ENCODE measurements at regions of chr20 and their contacts with region 1.

Region 1: GRCh38 chr20:45857114-45857881 is at the starts of genes ACOT8 and ZSWIM3:
- DNase-seq: peak; percentile 67
- ATAC-seq: peak; percentile 98
- H3K4me3 Mint-ChIP-seq: peak within 1 kb of the TSS; percentile 94
- H3K27ac Mint-ChIP-seq: peak within 1 kb of the TSS; percentile 94
- H3K4me1 Mint-ChIP-seq: peaks cover 48% of the 10 kb centered on the region
- H3K27me3 Mint-ChIP-seq: no peaks in the 10 kb centered on the region
- CTCF ChIP-seq: no peak
- total RNA-seq, gene ACOT8: 24.5 and 27.3 TPM in 2 replicates
- total RNA-seq, gene ZSWIM3: 5.9 and 6.4 TPM in 2 replicates

Region 2: DNA sequence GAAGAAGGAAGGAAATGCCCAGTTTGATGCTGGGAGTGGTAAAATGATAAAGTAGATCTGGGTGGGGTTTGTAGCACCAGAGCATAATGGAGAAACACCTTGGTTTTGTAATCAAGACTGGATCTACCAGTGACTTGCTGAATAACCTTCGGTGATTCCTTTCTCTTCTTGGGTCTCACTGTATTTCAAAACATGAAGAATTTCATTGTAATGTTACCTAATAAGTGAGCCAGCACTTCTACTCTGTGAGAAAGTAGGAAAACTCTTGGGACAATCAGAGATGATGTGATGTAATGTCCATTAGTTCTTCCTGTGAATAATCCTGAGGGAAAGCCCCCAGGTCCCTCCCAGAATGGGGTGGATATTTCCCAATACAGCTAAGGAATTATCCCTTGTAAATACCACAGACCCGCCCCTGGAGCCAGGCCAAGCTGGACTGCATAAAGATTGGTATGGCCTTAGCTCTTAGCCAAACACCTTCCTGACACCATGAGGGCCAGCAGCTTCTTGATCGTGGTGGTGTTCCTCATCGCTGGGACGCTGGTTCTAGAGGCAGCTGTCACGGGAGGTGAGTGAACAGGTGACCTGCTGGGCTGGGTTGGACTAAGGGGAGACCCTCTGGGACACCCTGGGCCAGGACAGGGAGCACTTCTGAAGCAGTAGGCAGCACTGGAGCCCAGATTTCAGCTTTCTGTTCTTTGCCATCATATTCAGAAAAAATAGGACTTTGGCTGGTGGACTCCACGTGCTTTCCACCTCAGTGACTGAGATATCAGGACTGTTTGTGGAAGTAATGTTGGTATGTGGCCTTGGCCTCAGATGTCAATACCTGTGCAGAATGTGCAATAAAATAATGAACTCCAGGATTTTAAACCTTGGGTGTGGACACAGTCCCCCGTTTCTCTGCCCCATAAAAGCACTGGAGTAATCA is 682.6 kb before region 1 on chr20 and contains the start of gene PI3:
- CTCF ChIA-PET with region 1: no interaction called
- POLR2A ChIA-PET with region 1: no interaction called
- intact Hi-C with region 1: no loop called
- DNase-seq: no peak
- ATAC-seq: no peak
- H3K4me3 Mint-ChIP-seq: no peak within 1 kb of the TSS
- H3K27ac Mint-ChIP-seq: no peak within 1 kb of the TSS
- H3K4me1 Mint-ChIP-seq: no peaks in the 10 kb centered on the region
- H3K27me3 Mint-ChIP-seq: peaks cover 27% of the 10 kb centered on the region
- CTCF ChIP-seq: no peak
- total RNA-seq, gene PI3: not detected in 2 replicates

Region 3: GRCh38 chr20:45798935-45799642 is 58.2 kb before region 1 on chr20:
- CTCF ChIA-PET with region 1: no interaction called
- POLR2A ChIA-PET with region 1: no interaction called
- intact Hi-C with region 1: no loop called
- DNase-seq: peak; percentile 25
- ATAC-seq: peak; percentile 95
- H3K4me3 Mint-ChIP-seq: no peak overlapping the region
- H3K27ac Mint-ChIP-seq: no peak overlapping the region
- H3K4me1 Mint-ChIP-seq: peaks cover 9% of the 10 kb centered on the region
- H3K27me3 Mint-ChIP-seq: no peaks in the 10 kb centered on the region
- CTCF ChIP-seq: no peak

Region 4: DNA sequence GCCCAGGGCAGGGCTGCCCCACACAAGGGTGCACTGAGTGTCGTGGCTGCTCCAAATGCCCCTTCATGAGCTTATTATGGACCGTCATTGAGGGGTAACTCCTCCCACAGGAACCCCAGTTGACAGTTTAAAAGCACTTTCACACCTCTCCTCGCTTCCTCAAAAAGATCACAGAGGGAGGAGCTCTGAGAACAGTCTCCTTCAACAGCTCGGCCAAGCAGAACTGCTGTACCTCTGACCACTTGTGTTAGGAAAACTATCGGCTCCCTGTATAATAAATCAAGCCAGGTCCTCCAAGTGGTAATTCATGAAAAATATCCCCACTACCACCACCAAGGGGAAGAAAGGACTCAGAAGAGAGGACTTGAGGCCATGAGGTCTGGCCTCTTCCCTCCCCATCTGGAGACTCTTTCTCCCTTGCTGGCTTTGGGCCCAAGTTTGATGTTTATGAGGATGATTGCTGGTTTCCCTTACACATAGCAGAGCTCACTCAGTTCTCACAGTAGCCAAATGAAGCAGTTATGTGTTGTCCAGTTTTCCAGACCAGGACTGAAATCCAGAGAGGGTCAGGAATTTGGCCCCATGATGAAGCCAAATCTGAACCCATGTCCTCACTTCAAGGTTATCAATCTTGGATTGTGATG is 15.0 kb before region 1 on chr20:
- CTCF ChIA-PET with region 1: interaction called, 5 read pairs
- POLR2A ChIA-PET with region 1: interaction called, 9 read pairs
- intact Hi-C with region 1: loop called (anchors 1 kb)
- DNase-seq: no peak
- ATAC-seq: peak; percentile 98
- H3K4me3 Mint-ChIP-seq: no peak overlapping the region
- H3K27ac Mint-ChIP-seq: peak overlapping the region; percentile 73
- H3K4me1 Mint-ChIP-seq: peaks cover 18% of the 10 kb centered on the region
- H3K27me3 Mint-ChIP-seq: no peaks in the 10 kb centered on the region
- CTCF ChIP-seq: no peak

Region 5: DNA sequence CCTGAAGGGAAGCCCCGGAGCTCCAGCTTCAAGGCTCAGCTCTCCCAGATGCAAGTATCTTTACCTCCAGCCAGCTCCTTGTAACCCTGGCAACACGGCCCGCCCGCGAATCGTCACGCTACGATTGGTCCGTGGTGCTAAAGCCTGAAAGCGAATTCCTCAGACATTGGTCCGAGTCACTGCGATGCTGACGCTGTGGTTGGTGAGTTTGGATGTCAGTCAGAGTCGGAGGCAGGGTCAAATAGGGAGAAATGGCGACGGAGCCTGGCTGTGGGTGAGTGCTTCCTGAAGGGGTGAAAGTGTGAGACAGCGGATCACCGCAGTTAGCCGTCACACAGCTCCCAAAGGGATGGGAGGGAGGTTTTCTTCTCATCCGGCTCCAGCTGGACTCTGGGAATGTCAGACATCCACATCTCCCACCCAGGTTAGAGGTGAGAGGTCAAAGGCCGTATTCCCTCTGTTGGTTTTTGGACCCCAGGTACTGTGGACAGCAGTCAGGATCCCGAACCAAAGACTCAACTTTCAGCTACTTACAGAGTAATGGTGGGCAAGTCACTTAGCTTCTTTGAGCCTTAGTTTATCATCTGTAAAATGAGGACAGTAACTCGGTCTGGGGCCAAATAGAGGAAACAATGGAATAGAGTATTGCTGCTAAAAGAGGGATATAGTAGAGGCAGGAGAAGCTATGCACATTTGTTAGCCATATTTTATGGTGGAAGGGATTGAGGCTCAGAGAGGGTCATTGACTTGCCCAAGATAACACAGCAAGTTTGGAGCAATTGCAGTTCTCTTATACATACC is 23.9 kb after region 1 on chr20 and contains the start of gene ZSWIM1:
- CTCF ChIA-PET with region 1: no interaction called
- POLR2A ChIA-PET with region 1: interaction called, 20 read pairs
- intact Hi-C with region 1: loop called (anchors 1 kb)
- DNase-seq: peak; percentile 98
- ATAC-seq: peak; percentile 99
- H3K4me3 Mint-ChIP-seq: peak within 1 kb of the TSS; percentile 90
- H3K27ac Mint-ChIP-seq: peak within 1 kb of the TSS; percentile 93
- H3K4me1 Mint-ChIP-seq: peaks cover 34% of the 10 kb centered on the region
- H3K27me3 Mint-ChIP-seq: no peaks in the 10 kb centered on the region
- CTCF ChIP-seq: no peak
- total RNA-seq, gene ZSWIM1: 13.9 and 15.1 TPM in 2 replicates

Region 6: DNA sequence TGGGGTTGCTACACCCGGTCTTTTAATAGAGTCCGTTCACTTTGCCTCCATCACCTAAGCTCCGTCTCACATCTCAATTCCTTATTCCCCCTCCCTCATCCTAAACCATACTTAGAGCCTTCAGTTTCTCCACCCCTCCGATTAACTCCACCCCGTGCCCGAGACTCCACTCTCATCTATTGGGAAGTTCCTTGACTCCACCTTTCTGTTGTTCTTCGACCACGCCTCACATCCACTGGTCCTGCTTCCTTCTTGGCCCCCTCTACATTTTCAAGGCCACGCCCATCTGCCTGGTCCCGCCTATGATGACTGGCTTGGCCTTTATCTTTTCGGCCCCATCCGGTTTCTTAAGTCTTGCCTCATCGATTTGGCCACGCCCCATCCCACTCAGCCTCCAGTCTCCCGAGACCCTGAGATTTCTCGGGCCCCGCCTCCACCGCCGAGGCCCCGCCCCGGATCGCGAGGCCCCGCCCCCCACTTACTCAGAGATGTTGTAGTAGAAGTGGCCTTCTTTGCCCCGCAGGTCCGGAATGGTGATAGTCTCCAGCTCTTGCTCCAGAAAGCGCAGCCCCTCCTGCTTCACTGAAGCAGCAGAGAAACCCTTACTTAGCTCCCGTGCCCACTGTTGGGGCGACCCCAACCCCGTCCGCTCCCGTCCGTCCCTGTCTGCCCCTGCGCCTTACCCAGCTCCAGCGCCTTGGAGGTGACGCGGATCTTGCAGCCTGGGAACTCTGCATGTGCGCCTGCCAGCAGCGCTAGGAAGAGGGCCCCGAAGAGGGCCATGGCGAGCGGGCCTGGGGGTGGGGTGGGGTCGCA is 53.6 kb after region 1 on chr20:
- CTCF ChIA-PET with region 1: no interaction called
- POLR2A ChIA-PET with region 1: interaction called, 9 read pairs
- intact Hi-C with region 1: loop called (anchors 1 kb)
- DNase-seq: peak; percentile 97
- ATAC-seq: peak; percentile 92
- H3K4me3 Mint-ChIP-seq: peak overlapping the region; percentile 90
- H3K27ac Mint-ChIP-seq: peak overlapping the region; percentile 83
- H3K4me1 Mint-ChIP-seq: peaks cover 31% of the 10 kb centered on the region
- H3K27me3 Mint-ChIP-seq: peaks cover 6% of the 10 kb centered on the region
- CTCF ChIP-seq: no peak

Region 7: DNA sequence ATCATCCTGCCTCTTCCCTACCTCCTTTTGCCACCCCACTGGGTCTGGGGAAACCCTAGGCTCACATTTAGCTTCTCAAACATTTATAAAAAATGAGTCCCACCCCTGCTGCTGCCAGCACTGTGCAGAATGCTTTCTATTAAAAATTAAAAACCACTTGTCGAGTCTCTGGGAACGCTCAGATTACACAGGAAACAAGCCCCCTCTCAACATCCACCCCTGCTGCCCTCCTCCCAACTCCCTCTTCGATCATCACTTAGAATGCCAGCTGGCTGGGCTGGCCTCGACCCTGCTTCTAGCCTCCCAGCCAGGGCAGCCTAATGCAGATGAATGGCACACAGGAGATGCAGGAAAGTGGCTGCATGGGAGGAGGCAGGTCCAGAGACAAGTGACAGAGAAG is 375.2 kb after region 1 on chr20:
- CTCF ChIA-PET with region 1: no interaction called
- POLR2A ChIA-PET with region 1: no interaction called
- intact Hi-C with region 1: no loop called
- DNase-seq: no peak
- ATAC-seq: no peak
- H3K4me3 Mint-ChIP-seq: no peak overlapping the region
- H3K27ac Mint-ChIP-seq: no peak overlapping the region
- H3K4me1 Mint-ChIP-seq: no peaks in the 10 kb centered on the region
- H3K27me3 Mint-ChIP-seq: peaks cover 29% of the 10 kb centered on the region
- CTCF ChIP-seq: no peak

Measured in activated B cell treated with CpG ODN at 0.5 μM for 24 hours (primary cell).